Vagina (tissue), 2 donors: ENCODE measurements at regions of chr1 and their contacts with region 1.

Region 1: GRCh38 chr1:13662493-13662892 is 37.5 kb upstream of the PRDM2 start:
- DNase-seq: no peak
- H3K4me3 ChIP-seq: no peak overlapping the region
- H3K27ac ChIP-seq: peak overlapping the region; percentile 74
- H3K4me1 ChIP-seq: peaks cover 52% of the 10 kb centered on the region
- H3K27me3 ChIP-seq: no peaks in the 10 kb centered on the region
- CTCF ChIP-seq: no peak
- POLR2A ChIP-seq: no peak

Region 2: GRCh38 chr1:13807213-13807612 is 144.7 kb after region 1 on chr1:
- intact Hi-C with region 1: loop called (anchors 10 kb)
- DNase-seq: no peak
- H3K4me3 ChIP-seq: no peak overlapping the region
- H3K27ac ChIP-seq: no peak overlapping the region
- H3K4me1 ChIP-seq: peaks cover 17% of the 10 kb centered on the region
- H3K27me3 ChIP-seq: no peaks in the 10 kb centered on the region
- CTCF ChIP-seq: no peak
- POLR2A ChIP-seq: no peak

Region 3: DNA sequence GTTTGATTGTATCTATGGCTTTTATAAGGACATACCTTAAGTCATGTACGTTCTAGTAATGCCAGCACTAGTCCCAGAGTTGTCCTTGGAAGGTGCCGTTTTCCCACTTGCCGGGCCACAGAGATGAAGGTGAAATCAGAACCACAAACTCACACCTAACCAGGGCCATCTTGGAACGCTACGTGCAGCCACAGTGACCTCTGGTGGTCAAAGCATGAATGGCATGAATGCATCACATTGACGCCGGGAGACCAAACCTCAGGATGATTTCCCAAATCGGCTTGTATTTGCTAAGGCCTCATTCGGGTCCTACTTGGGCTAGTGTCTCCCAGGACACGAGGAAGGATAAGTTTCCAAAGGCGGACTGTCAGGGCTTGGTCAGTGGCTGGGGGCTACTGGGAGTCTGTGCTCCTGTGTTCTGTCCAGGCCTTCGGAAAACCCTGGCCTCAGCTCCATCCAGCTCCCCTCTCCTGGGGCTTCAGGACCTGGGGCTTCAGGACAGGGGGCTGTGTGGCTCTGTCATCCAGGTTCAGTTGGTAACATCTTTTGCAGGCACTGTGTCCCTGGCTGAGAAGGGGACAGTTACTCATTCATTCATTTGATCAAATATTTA is 298.0 kb after region 1 on chr1:
- intact Hi-C with region 1: loop called (anchors 2 kb)
- DNase-seq: no peak
- H3K4me3 ChIP-seq: no peak overlapping the region
- H3K27ac ChIP-seq: no peak overlapping the region
- H3K4me1 ChIP-seq: no peaks in the 10 kb centered on the region
- H3K27me3 ChIP-seq: no peaks in the 10 kb centered on the region
- CTCF ChIP-seq: peak; percentile 81 to 98 (median 97)
- POLR2A ChIP-seq: no peak